Mammary epithelial cell (primary cell): ENCODE measurements at regions of chr6 and their contacts with region 1.

Region 1: GRCh38 chr6:139375232-139376016 is 976 bp upstream of the CITED2 start:
- DNase-seq: peak; percentile 94
- H3K4me3 ChIP-seq: peak overlapping the region; percentile 62 to 76 (median 70)
- H3K27ac ChIP-seq: peak overlapping the region; percentile 92
- H3K4me1 ChIP-seq: peaks cover 43% of the 10 kb centered on the region
- H3K27me3 ChIP-seq: no peaks in the 10 kb centered on the region
- CTCF ChIP-seq: peak in 1 of 2 donors; percentile 24

Region 2: DNA sequence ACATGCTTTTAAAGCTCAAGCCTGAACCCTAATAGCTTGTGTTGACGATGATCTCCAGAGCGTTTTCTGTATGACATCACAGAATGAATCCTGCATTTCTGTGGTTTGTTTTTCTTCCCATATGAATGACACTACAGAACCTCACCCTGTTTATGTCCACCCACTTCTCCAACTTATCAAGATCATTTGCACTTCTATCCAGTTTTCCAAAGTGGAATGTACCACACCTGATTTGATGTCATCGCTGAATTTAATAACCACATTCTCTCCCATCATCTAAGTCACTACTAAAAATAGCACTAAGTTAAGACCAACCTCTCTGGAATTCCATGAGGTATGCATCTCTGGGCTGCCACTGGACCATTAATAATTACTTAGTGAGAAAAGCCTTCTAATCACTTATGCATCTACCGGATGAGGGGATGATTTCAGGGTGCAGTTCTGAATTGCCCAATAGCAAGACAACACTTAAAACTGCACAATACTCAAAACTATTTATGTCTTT is 32.3 kb after region 1 on chr6:
- CTCF ChIA-PET with region 1: no interaction called
- dilution Hi-C with region 1: no loop called
- in situ Hi-C with region 1: no loop called
- intact Hi-C with region 1: loop called (anchors 1 kb)
- DNase-seq: peak; percentile 98
- H3K4me3 ChIP-seq: no peak overlapping the region
- H3K27ac ChIP-seq: peak overlapping the region; percentile 67
- H3K4me1 ChIP-seq: peaks cover 23% of the 10 kb centered on the region
- H3K27me3 ChIP-seq: no peaks in the 10 kb centered on the region
- CTCF ChIP-seq: no peak

Region 3: GRCh38 chr6:139468178-139468819 is 92.9 kb after region 1 on chr6:
- CTCF ChIA-PET with region 1: no interaction called
- dilution Hi-C with region 1: no loop called
- in situ Hi-C with region 1: no loop called
- intact Hi-C with region 1: loop called (anchors 1 kb)
- DNase-seq: peak; percentile 32
- H3K4me3 ChIP-seq: no peak overlapping the region
- H3K27ac ChIP-seq: no peak overlapping the region
- H3K4me1 ChIP-seq: peaks cover 10% of the 10 kb centered on the region
- H3K27me3 ChIP-seq: no peaks in the 10 kb centered on the region
- CTCF ChIP-seq: no peak

Region 4: GRCh38 chr6:139597771-139598755 is 222.6 kb after region 1 on chr6:
- CTCF ChIA-PET with region 1: interaction called, 4 read pairs
- dilution Hi-C with region 1: no loop called
- in situ Hi-C with region 1: no loop called
- intact Hi-C with region 1: loop called (anchors 2 kb)
- DNase-seq: peak; percentile 81
- H3K4me3 ChIP-seq: no peak overlapping the region
- H3K27ac ChIP-seq: peak overlapping the region; percentile 63
- H3K4me1 ChIP-seq: peaks cover 22% of the 10 kb centered on the region
- H3K27me3 ChIP-seq: no peaks in the 10 kb centered on the region
- CTCF ChIP-seq: no peak

Region 5: DNA sequence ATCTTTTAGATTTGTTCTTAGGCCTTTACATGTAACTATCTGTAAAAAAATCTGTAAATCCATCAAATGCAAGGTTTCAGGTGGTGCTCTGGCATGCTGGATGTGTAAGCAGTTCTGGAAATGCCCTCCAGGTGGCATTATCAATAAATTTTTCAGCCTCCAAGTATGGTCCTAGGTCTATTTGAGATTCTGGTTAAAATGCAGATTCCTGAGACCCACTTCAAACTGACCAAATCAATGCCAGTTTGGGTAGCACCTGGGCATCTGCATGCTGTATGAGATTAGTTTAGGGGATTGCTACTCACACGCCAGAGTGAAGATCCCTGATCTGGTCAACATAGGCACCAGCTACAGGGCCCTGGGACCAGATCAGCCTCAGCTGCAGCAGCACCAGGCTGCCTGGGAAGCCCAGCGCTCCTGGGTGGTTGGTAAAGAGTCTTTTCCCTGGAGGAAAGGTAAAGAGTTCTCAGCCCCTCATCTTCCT is 506.3 kb after region 1 on chr6:
- CTCF ChIA-PET with region 1: interaction called, 3 read pairs
- dilution Hi-C with region 1: no loop called
- in situ Hi-C with region 1: no loop called
- intact Hi-C with region 1: loop called (anchors 1 kb)
- DNase-seq: peak; percentile 30
- H3K4me3 ChIP-seq: no peak overlapping the region
- H3K27ac ChIP-seq: no peak overlapping the region
- H3K4me1 ChIP-seq: peaks cover 9% of the 10 kb centered on the region
- H3K27me3 ChIP-seq: no peaks in the 10 kb centered on the region
- CTCF ChIP-seq: peak; percentile 70 to 73

Region 6: GRCh38 chr6:140043336-140043735 is 667.9 kb after region 1 on chr6:
- CTCF ChIA-PET with region 1: no interaction called
- dilution Hi-C with region 1: no loop called
- in situ Hi-C with region 1: no loop called
- intact Hi-C with region 1: loop called (anchors 5 kb)
- DNase-seq: peak; percentile 95
- H3K4me3 ChIP-seq: no peak overlapping the region
- H3K27ac ChIP-seq: peak overlapping the region; percentile 93
- H3K4me1 ChIP-seq: peaks cover 46% of the 10 kb centered on the region
- H3K27me3 ChIP-seq: no peaks in the 10 kb centered on the region
- CTCF ChIP-seq: no peak

Region 7: GRCh38 chr6:140271759-140272377 is 896.4 kb after region 1 on chr6:
- CTCF ChIA-PET with region 1: no interaction called
- dilution Hi-C with region 1: no loop called
- in situ Hi-C with region 1: no loop called
- intact Hi-C with region 1: loop called (anchors 10 kb)
- DNase-seq: no peak
- H3K4me3 ChIP-seq: no peak overlapping the region
- H3K27ac ChIP-seq: no peak overlapping the region
- H3K4me1 ChIP-seq: peaks cover 6% of the 10 kb centered on the region
- H3K27me3 ChIP-seq: no peaks in the 10 kb centered on the region
- CTCF ChIP-seq: no peak